ENCODE measurements at regions of chr3 and their contacts with region 1.

Region 1: GRCh38 chr3:48446425-48447193 is at the start of gene ATRIP:
- DNase-seq: peak; percentile 87
- H3K4me3 Mint-ChIP-seq: peak within 1 kb of the TSS; percentile 96
- H3K27ac Mint-ChIP-seq: peak within 1 kb of the TSS; percentile 73
- H3K4me1 Mint-ChIP-seq: peaks cover 25% of the 10 kb centered on the region
- H3K27me3 Mint-ChIP-seq: no peaks in the 10 kb centered on the region
- CTCF ChIP-seq: no peak
- total RNA-seq, gene ATRIP: 8.6 and 9.1 TPM in 2 replicates

Region 2: DNA sequence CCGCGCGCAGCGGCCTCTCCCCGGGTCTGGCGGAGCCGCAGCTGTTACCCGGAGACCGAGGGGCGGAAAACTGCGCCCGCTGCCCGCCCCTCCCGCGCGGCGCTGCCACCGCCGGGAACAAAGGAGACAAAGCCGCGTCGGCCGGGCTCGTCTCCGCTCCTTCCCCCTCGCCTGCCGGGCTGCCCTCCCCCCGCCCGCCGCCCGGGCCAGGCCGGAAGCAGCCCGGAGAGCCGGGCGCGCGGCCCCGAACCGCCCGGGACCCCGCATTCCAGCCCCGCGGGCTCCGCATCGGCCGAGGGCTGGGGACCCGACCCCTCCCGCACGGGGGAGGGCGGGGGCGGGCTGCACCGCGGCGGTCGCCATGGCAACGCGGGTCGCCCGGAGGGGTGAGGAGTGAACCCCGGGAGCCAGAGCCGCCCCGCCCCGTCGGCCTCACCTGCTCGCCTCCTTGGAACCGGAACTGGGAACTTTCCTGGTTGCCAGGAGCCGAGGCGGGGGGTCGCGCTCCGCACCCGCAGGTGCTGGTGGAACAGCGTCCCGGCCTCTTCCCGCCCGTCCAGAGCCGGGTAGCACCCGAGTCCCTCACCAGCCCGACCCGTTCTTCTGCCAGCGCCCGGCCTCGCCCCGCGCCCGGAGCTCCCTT is 17.2 kb before region 1 on chr3:
- CTCF ChIA-PET with region 1: interaction called, 4 read pairs
- POLR2A ChIA-PET with region 1: interaction called, 95 read pairs
- intact Hi-C with region 1: no loop called
- DNase-seq: peak; percentile 69
- H3K4me3 Mint-ChIP-seq: peak overlapping the region; percentile 99
- H3K27ac Mint-ChIP-seq: peak overlapping the region; percentile 98
- H3K4me1 Mint-ChIP-seq: peaks cover 71% of the 10 kb centered on the region
- H3K27me3 Mint-ChIP-seq: no peaks in the 10 kb centered on the region
- CTCF ChIP-seq: no peak

Region 3: DNA sequence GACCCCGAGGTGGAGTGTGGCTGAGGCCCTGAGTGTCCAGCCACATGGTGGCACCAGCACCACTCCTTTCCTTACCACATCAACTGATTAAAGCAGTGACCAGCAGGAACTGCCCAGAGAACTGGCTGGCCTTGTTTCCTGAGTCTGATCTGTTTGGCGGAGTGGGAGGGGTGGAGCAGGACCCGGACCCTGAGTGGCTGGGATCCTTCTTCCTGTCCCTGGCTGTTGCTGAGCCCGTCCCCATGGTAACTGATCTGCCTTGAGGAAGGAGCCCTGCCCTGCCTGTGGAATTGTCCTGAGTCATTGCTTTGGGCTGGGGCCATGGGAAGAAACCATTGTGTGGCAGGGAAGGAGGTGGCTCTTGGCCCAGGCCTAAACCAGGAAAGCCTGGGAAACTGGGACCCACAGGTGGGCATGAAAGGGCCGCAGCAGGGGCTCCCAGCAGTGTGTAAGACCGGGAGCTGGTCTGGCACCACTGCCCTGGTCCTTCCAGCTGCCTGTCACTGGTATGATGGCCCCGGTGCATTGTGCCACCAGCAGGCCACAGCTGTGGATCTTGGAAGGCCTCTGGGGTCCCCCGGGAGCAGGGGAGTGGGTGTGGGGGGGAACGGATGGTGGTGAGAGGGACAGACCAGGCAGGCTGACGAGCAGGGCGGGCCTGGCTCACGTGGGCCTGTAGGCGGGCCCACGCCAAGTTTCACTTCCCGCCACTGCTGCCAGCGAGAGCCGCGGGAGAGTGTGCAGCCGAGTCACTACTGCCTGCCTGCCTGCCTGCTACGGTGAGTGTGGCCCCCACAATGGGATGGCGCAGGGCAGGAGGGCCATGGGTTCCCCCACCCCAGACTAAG is 19.1 kb after region 1 on chr3:
- CTCF ChIA-PET with region 1: no interaction called
- POLR2A ChIA-PET with region 1: interaction called, 12 read pairs
- intact Hi-C with region 1: no loop called
- DNase-seq: peak; percentile 99
- H3K4me3 Mint-ChIP-seq: peak overlapping the region; percentile 67
- H3K27ac Mint-ChIP-seq: peak overlapping the region; percentile 99
- H3K4me1 Mint-ChIP-seq: peaks cover 25% of the 10 kb centered on the region
- H3K27me3 Mint-ChIP-seq: no peaks in the 10 kb centered on the region
- CTCF ChIP-seq: peak; percentile 38

Region 4: DNA sequence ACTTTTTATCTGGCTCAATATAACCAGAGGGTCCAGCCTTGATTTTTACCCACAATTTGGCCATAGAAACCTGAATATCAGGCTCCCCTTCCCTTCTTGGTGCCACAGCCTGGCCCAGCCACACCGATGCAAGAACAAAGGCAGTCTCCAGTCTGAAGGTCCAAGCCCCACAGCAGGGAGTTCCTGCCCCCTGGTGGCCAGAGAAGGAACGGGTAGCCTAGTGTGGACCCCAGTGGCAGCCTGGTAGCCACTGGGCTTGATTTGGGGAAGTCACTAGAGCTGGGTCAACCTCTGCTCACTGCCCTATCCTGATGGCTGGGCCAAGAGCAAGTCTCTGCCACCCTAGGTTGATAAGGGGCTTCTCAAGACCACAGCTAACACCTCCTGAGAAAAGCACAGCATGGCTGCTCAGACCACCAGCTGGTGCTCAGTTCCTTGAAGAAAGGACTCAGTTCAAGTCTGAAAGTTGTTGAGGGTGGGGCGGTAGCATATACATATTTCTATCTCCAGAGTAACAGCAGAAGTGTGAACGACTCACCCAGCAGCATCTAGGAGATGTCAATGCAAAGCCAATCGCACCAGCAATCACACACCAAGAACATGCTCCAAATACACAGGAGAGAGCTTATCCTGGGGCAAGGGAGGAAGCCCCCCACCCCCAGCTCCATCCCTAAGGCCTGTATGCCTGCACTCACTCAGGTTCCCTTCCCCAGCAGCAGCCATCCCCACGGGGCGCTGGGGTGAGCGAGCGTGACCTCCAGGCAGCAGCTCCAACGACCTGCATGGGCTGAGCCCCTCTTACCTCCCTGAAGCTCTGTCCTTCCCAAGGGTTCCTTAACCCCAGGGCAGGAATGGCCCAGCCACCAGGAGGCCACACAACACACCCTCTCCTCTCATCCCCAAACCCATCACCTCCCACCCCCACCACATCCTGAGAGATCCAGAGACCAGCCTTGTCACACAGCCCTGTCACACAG is 102.4 kb after region 1 on chr3:
- CTCF ChIA-PET with region 1: interaction called, 16 read pairs
- POLR2A ChIA-PET with region 1: interaction called, 4 read pairs
- intact Hi-C with region 1: loop called (anchors 5 kb)
- DNase-seq: peak; percentile 80
- H3K4me3 Mint-ChIP-seq: no peak overlapping the region
- H3K27ac Mint-ChIP-seq: no peak overlapping the region
- H3K4me1 Mint-ChIP-seq: no peaks in the 10 kb centered on the region
- H3K27me3 Mint-ChIP-seq: no peaks in the 10 kb centered on the region
- CTCF ChIP-seq: peak; percentile 97